Dendritic cell treated with granulocyte-macrophage colony-stimulating factor and Interleukin-4, amounts not matched to agents 40 ng/mL and 50 ng/mL, for 4 days (primary cell): ENCODE measurements at regions of chr11 and their contacts with region 1.

Region 1: GRCh38 chr11:2480874-2481220 is 36.0 kb downstream of the KCNQ1 start:
- H3K4me3 Mint-ChIP-seq: peak overlapping the region; percentile 65
- H3K27ac Mint-ChIP-seq: peak overlapping the region; percentile 87
- H3K4me1 Mint-ChIP-seq: peaks cover 71% of the 10 kb centered on the region
- H3K27me3 Mint-ChIP-seq: no peaks in the 10 kb centered on the region

Region 2: DNA sequence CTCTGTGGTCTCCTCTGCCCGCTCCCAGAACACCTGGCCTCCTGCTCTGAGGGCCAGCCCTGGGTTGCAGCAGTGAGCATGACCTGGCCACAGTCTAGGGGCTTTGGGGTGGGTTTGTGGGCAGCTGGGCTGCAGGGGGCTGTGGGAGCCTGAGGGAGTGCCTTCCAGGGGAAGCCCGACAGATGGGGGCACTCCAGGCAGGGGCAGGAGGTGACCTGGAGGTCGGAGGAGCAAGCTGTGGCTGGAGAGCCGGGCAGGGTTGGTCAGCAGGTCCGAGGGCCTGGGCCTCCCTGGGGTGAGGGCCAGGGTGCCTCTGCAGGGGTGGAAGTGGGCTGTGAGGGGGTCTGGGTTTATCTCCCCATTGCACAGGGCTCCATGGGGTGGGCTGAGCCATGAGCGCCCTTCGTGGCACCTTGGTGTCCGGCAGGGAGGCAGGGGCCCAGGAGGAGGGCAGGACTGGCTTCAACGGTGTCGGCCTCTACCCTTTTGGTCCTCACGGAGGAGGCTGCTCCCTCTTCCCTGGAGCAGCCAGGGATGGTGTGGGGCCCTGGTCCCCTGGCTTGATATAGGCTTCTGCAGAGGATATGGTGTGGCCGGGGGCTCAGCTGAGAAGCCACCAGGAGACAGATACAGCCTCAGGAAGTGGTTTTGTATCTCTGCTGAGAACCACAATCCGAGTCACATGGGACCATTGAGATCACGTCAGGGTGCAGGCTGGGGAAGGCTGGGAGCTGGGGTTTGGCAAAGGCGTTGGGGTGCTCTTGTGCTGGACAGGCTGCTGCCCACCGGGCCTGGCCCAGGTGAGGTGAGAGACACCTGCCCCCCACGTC is 13.8 kb before region 1 on chr11:
- intact Hi-C with region 1: no loop called
- H3K4me3 Mint-ChIP-seq: no peak overlapping the region
- H3K27ac Mint-ChIP-seq: peak overlapping the region; percentile 63
- H3K4me1 Mint-ChIP-seq: peaks cover 92% of the 10 kb centered on the region
- H3K27me3 Mint-ChIP-seq: peaks cover 3% of the 10 kb centered on the region

Region 3: GRCh38 chr11:2498750-2499149 is 17.9 kb after region 1 on chr11:
- intact Hi-C with region 1: no loop called
- H3K4me3 Mint-ChIP-seq: no peak overlapping the region
- H3K27ac Mint-ChIP-seq: no peak overlapping the region
- H3K4me1 Mint-ChIP-seq: peaks cover 29% of the 10 kb centered on the region
- H3K27me3 Mint-ChIP-seq: peaks cover 16% of the 10 kb centered on the region

Region 4: GRCh38 chr11:2526808-2527381 is 46.0 kb after region 1 on chr11:
- intact Hi-C with region 1: loop called (anchors 2 kb)
- H3K4me3 Mint-ChIP-seq: peak overlapping the region; percentile 71
- H3K27ac Mint-ChIP-seq: peak overlapping the region; percentile 92
- H3K4me1 Mint-ChIP-seq: peaks cover 68% of the 10 kb centered on the region
- H3K27me3 Mint-ChIP-seq: peaks cover 4% of the 10 kb centered on the region

Region 5: GRCh38 chr11:2586087-2586792 is 105.4 kb after region 1 on chr11:
- intact Hi-C with region 1: no loop called
- H3K4me3 Mint-ChIP-seq: no peak overlapping the region
- H3K27ac Mint-ChIP-seq: no peak overlapping the region
- H3K4me1 Mint-ChIP-seq: no peaks in the 10 kb centered on the region
- H3K27me3 Mint-ChIP-seq: no peaks in the 10 kb centered on the region